CD4-positive, alpha-beta T cell (primary cell): ENCODE measurements at regions of chr4 and their contacts with region 1.

Region 1: DNA sequence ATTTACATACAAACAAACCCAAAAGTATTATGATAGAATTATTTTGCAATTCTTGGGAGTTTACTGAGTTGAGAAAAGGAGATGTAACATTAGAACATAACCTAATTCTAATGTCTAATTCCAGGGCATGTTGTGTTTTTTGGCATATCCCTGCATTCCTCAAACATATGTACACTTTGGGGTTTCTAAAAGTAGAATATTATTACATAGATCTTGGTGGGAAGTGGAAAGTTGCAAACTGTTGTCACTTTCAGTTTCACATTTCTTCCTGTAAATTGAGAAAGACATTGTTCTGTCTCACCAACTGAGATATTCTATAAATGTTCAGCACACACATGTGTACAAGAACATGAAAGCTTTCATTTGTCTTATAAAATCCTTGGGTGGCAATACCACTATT is 24.4 kb upstream of the GBA3 start:
- DNase-seq: peak in 1 of 14 experiments; percentile 9
- ATAC-seq: no peak
- H3K4me3 ChIP-seq: no peak overlapping the region
- H3K4me3 Mint-ChIP-seq: peak overlapping the region; percentile 53
- H3K27ac ChIP-seq: peak overlapping the region in 1 of 2 donors; percentile 20
- H3K27ac Mint-ChIP-seq: peak overlapping the region; percentile 80
- H3K4me1 ChIP-seq: peaks cover 4% of the 10 kb centered on the region
- H3K4me1 Mint-ChIP-seq: peaks cover 49% of the 10 kb centered on the region
- H3K27me3 ChIP-seq: no peaks in the 10 kb centered on the region
- H3K27me3 Mint-ChIP-seq: no peaks in the 10 kb centered on the region
- CTCF ChIP-seq: no peak

Region 2: GRCh38 chr4:21011106-21011505 is 1657.2 kb before region 1 on chr4:
- CTCF ChIA-PET with region 1: no interaction called
- POLR2A ChIA-PET with region 1: no interaction called
- intact Hi-C with region 1: no loop called
- DNase-seq: no peak
- ATAC-seq: no peak
- H3K4me3 ChIP-seq: no peak overlapping the region
- H3K4me3 Mint-ChIP-seq: no peak overlapping the region
- H3K27ac ChIP-seq: no peak overlapping the region
- H3K27ac Mint-ChIP-seq: no peak overlapping the region
- H3K4me1 ChIP-seq: no peaks in the 10 kb centered on the region
- H3K4me1 Mint-ChIP-seq: no peaks in the 10 kb centered on the region
- H3K27me3 ChIP-seq: no peaks in the 10 kb centered on the region
- H3K27me3 Mint-ChIP-seq: no peaks in the 10 kb centered on the region
- CTCF ChIP-seq: no peak

Region 3: GRCh38 chr4:22444813-22445212 is 223.5 kb before region 1 on chr4:
- CTCF ChIA-PET with region 1: no interaction called
- POLR2A ChIA-PET with region 1: no interaction called
- intact Hi-C with region 1: loop called in 1 of 2 experiments (anchors 10 kb)
- DNase-seq: no peak
- ATAC-seq: no peak
- H3K4me3 ChIP-seq: no peak overlapping the region
- H3K4me3 Mint-ChIP-seq: peak overlapping the region; percentile 82
- H3K27ac ChIP-seq: no peak overlapping the region
- H3K27ac Mint-ChIP-seq: peak overlapping the region; percentile 89
- H3K4me1 ChIP-seq: no peaks in the 10 kb centered on the region
- H3K4me1 Mint-ChIP-seq: peaks cover 38% of the 10 kb centered on the region
- H3K27me3 ChIP-seq: no peaks in the 10 kb centered on the region
- H3K27me3 Mint-ChIP-seq: no peaks in the 10 kb centered on the region
- CTCF ChIP-seq: no peak

Region 4: GRCh38 chr4:22483551-22483981 is 184.7 kb before region 1 on chr4:
- CTCF ChIA-PET with region 1: no interaction called
- POLR2A ChIA-PET with region 1: no interaction called
- intact Hi-C with region 1: no loop called
- DNase-seq: peak in 1 of 14 experiments; percentile 14
- ATAC-seq: no peak
- H3K4me3 ChIP-seq: no peak overlapping the region
- H3K4me3 Mint-ChIP-seq: no peak overlapping the region
- H3K27ac ChIP-seq: no peak overlapping the region
- H3K27ac Mint-ChIP-seq: no peak overlapping the region
- H3K4me1 ChIP-seq: no peaks in the 10 kb centered on the region
- H3K4me1 Mint-ChIP-seq: peaks cover 20% of the 10 kb centered on the region
- H3K27me3 ChIP-seq: no peaks in the 10 kb centered on the region
- H3K27me3 Mint-ChIP-seq: no peaks in the 10 kb centered on the region
- CTCF ChIP-seq: no peak